ENCODE measurements at regions of chr15 and their contacts with region 1.

Region 1: GRCh38 chr15:43776718-43777583 is at the start of gene ELL3:
- DNase-seq: peak; percentile 33 to 90
- H3K4me3 ChIP-seq: peak within 1 kb of the TSS; percentile 51 to 78 (median 71)
- H3K27ac ChIP-seq: no peak within 1 kb of the TSS
- H3K4me1 ChIP-seq: peaks cover 0 to 12% (median 5%) of the 10 kb centered on the region in 4 experiments; a peak in 5 of 7 replicates
- H3K27me3 ChIP-seq: peaks cover 0 to 2% (median 0%) of the 10 kb centered on the region in 4 experiments; a peak in 2 of 7 replicates
- CTCF ChIP-seq: peak; percentile 68 to 92 (median 85)
- EP300 ChIP-seq: no peak
- POLR2A ChIP-seq: no peak; a peak in 1 of 3 replicates
- RAD21 ChIP-seq: peak in 1 of 2 experiments; percentile 45; a peak in 2 of 4 replicates
- total RNA-seq, gene ELL3: 9.2 and 11.0 TPM in 2 replicates

Region 2: DNA sequence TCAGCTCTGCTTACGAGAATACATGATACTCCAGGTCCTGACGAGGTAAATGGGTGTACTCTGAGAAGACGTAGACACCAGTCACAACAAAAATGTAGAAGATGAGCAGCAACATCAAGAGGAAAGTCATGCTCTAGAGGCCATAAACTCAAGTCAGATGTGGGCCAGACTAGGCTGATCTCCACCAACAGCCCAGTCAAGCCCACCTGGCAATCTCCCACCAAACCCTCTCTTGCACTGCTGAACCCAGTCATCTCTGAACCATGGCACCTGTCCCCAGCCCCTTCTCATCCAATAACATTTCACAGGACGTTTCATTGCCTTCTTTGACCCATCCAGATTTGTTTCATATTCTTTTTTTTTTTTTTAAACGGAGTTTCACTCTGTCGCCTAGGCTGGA is 41.5 kb before region 1 on chr15:
- CTCF ChIA-PET with region 1: no interaction called
- POLR2A ChIA-PET with region 1: no interaction called
- DNase-seq: no peak
- H3K4me3 ChIP-seq: no peak overlapping the region
- H3K27ac ChIP-seq: no peak overlapping the region
- H3K4me1 ChIP-seq: no peaks in the 10 kb centered on the region
- H3K27me3 ChIP-seq: no peaks in the 10 kb centered on the region
- CTCF ChIP-seq: no peak
- EP300 ChIP-seq: no peak
- POLR2A ChIP-seq: no peak
- RAD21 ChIP-seq: no peak

Region 3: GRCh38 chr15:43791993-43792760 is 15.2 kb after region 1 on chr15 and contains the start of gene SERF2:
- CTCF ChIA-PET with region 1: interaction called, 50 read pairs
- POLR2A ChIA-PET with region 1: interaction called, 39 read pairs
- DNase-seq: peak; percentile 99 to 100
- H3K4me3 ChIP-seq: peak within 1 kb of the TSS; percentile 86 to 97 (median 95)
- H3K27ac ChIP-seq: peak within 1 kb of the TSS; percentile 95
- H3K4me1 ChIP-seq: peaks cover 19 to 27% (median 22%) of the 10 kb centered on the region in 4 experiments; a peak in 6 of 7 replicates
- H3K27me3 ChIP-seq: no peaks in the 10 kb centered on the region
- CTCF ChIP-seq: no peak
- EP300 ChIP-seq: no peak
- POLR2A ChIP-seq: peak; percentile 98 to 99
- RAD21 ChIP-seq: no peak
- total RNA-seq, gene SERF2: 655 and 672 TPM in 2 replicates

Region 4: GRCh38 chr15:43800286-43801141 is 23.6 kb after region 1 on chr15 and contains the start of gene HYPK:
- CTCF ChIA-PET with region 1: interaction called, 9 read pairs
- POLR2A ChIA-PET with region 1: interaction called, 54 read pairs
- DNase-seq: peak; percentile 41 to 88
- H3K4me3 ChIP-seq: peak within 1 kb of the TSS; percentile 67 to 97 (median 88)
- H3K27ac ChIP-seq: peak within 1 kb of the TSS; percentile 28; the same call in 1 of the 2 replicates
- H3K4me1 ChIP-seq: peaks cover 7 to 16% (median 11%) of the 10 kb centered on the region in 4 experiments
- H3K27me3 ChIP-seq: no peaks in the 10 kb centered on the region
- CTCF ChIP-seq: no peak
- EP300 ChIP-seq: no peak
- POLR2A ChIP-seq: peak; percentile 2 to 82
- RAD21 ChIP-seq: no peak
- total RNA-seq, gene HYPK: 9.9 and 17.6 TPM in 2 replicates

Region 5: DNA sequence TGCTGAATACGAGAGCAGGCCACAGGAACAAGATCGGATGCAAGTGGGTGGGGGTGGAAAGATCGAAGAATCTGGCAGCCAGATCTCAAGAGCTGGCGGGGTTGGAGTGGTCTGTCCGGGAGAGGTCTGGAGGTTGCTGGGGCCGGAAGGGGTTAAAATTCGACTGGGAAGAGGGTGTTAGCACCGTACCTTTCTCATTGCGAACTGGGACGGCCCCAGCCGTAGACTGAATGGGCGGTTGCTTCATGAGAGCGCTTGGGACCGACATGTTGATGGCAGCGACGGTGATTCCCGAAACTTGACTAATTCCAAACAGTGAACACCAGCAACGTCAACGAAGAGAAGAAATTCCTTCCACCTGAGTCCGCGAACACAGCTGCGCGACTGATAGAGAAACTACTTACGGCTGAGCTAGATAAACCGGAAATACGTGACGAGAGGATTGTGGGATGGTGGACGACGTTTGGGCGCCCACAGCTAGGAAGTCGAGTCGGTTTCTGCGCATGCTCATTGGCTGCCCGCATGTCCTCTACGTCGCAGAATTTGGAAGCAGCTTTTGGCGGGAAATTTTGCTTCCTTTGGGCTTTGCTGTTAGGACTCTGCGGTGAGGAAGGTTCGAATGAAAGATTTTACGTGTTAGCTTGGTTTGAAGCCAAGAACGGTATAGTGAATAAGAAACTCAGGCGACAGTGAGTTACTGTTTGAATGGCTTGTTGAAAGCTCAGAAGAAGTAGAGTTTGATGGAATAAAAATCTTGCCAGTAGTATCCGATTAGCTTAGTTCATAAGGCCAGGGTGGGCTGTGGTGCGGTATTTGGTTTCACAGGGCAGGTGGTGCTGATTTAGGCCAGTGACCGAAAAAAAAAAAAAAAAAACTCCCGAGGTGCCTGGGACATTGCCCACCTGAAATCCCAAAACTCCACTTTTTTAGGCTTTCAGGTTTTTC is 47.6 kb after region 1 on chr15 and contains the start of gene MFAP1:
- CTCF ChIA-PET with region 1: no interaction called
- POLR2A ChIA-PET with region 1: interaction called, 10 read pairs
- DNase-seq: peak; percentile 72 to 83
- H3K4me3 ChIP-seq: peak within 1 kb of the TSS; percentile 63 to 98 (median 90)
- H3K27ac ChIP-seq: peak within 1 kb of the TSS; percentile 90
- H3K4me1 ChIP-seq: peaks cover 0 to 4% (median 2%) of the 10 kb centered on the region in 4 experiments; a peak in 4 of 7 replicates
- H3K27me3 ChIP-seq: peaks cover 0 to 16% (median 4%) of the 10 kb centered on the region in 4 experiments; a peak in 4 of 7 replicates
- CTCF ChIP-seq: no peak
- EP300 ChIP-seq: no peak
- POLR2A ChIP-seq: peak; percentile 48 to 94
- RAD21 ChIP-seq: no peak
- total RNA-seq, gene MFAP1: 36.6 and 36.7 TPM in 2 replicates

Region 6: GRCh38 chr15:44101944-44102343 is 325.0 kb after region 1 on chr15:
- CTCF ChIA-PET with region 1: no interaction called
- POLR2A ChIA-PET with region 1: no interaction called
- DNase-seq: no peak
- H3K4me3 ChIP-seq: no peak overlapping the region
- H3K27ac ChIP-seq: no peak overlapping the region
- H3K4me1 ChIP-seq: peaks cover 0 to 5% (median 2%) of the 10 kb centered on the region in 4 experiments; a peak in 2 of 7 replicates
- H3K27me3 ChIP-seq: no peaks in the 10 kb centered on the region
- CTCF ChIP-seq: no peak
- EP300 ChIP-seq: no peak
- POLR2A ChIP-seq: no peak
- RAD21 ChIP-seq: no peak

Measured in H1 (cell line).